WTC11 (cell line): ENCODE measurements at regions of chr15 and their contacts with region 1.

Region 1: GRCh38 chr15:57751177-57751800 is 44.8 kb downstream of the POLR2M start:
- DNase-seq: no peak
- ATAC-seq: peak; percentile 48
- H3K4me3 Mint-ChIP-seq: no peak overlapping the region
- H3K27ac Mint-ChIP-seq: no peak overlapping the region
- H3K4me1 Mint-ChIP-seq: peaks cover 39% of the 10 kb centered on the region
- H3K27me3 Mint-ChIP-seq: peaks cover 4% of the 10 kb centered on the region; the same call in 1 of the 2 replicates
- CTCF ChIP-seq: no peak

Region 2: GRCh38 chr15:57476533-57476975 is 274.7 kb before region 1 on chr15:
- CTCF ChIA-PET with region 1: no interaction called
- POLR2A ChIA-PET with region 1: no interaction called
- DNase-seq: no peak
- ATAC-seq: no peak
- H3K4me3 Mint-ChIP-seq: no peak overlapping the region
- H3K27ac Mint-ChIP-seq: peak overlapping the region; percentile 57; the same call in 1 of the 2 replicates
- H3K4me1 Mint-ChIP-seq: peaks cover 35% of the 10 kb centered on the region
- H3K27me3 Mint-ChIP-seq: no peaks in the 10 kb centered on the region
- CTCF ChIP-seq: no peak

Region 3: GRCh38 chr15:57591646-57592367 is 159.5 kb before region 1 on chr15 and contains the start of gene MYZAP:
- CTCF ChIA-PET with region 1: no interaction called
- POLR2A ChIA-PET with region 1: no interaction called
- DNase-seq: peak; percentile 66
- ATAC-seq: peak; percentile 95
- H3K4me3 Mint-ChIP-seq: peak within 1 kb of the TSS; percentile 75
- H3K27ac Mint-ChIP-seq: no peak within 1 kb of the TSS
- H3K4me1 Mint-ChIP-seq: peaks cover 11% of the 10 kb centered on the region
- H3K27me3 Mint-ChIP-seq: peaks cover 43% of the 10 kb centered on the region
- CTCF ChIP-seq: no peak
- total RNA-seq, gene MYZAP: 0.60 to 0.73 TPM (median 0.68 TPM) in 3 replicates

Region 4: GRCh38 chr15:57692709-57693108 is 58.6 kb before region 1 on chr15:
- CTCF ChIA-PET with region 1: no interaction called
- POLR2A ChIA-PET with region 1: no interaction called
- DNase-seq: no peak
- ATAC-seq: no peak
- H3K4me3 Mint-ChIP-seq: no peak overlapping the region
- H3K27ac Mint-ChIP-seq: no peak overlapping the region
- H3K4me1 Mint-ChIP-seq: no peaks in the 10 kb centered on the region
- H3K27me3 Mint-ChIP-seq: peaks cover 3% of the 10 kb centered on the region; the same call in 1 of the 2 replicates
- CTCF ChIP-seq: no peak

Region 5: DNA sequence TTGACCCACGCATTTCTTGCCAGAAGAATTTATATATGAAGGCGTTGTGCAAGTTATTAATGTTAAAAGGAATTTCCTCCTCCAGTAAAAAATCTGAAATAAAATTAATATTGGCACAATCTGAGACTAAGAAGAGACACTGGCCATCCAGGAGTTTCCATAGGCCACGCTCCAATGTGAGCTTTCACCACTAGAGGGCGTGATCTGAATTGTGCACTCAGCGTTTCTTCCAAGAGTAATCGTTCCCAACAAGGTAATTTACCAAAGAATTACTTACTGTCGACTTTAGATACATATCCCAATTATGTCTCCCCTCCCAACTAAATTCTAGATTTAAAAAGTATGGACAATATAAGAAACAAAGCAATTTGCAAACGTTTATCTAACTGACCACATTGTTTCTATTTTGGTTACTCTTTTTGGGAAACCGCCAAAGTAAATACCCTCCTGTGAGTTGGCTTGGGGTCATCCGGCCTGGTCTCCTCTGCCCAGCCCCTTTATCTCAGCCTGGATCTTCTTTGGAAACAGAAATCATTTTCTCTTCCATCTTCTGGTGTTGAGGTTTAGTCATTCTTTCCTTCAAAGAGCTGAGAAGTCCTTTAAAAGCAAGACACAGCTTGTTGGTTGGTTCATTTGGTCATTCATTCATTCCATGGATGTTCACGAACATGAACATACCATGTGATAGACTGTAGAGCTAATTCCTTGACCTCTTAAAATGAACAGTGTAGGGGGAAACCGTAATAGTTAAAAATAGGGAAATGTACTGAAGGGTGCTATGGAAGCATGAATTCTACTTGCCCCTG is 18.6 kb before region 1 on chr15:
- CTCF ChIA-PET with region 1: interaction called, 72 read pairs
- POLR2A ChIA-PET with region 1: no interaction called
- DNase-seq: peak; percentile 74
- ATAC-seq: peak; percentile 75
- H3K4me3 Mint-ChIP-seq: no peak overlapping the region
- H3K27ac Mint-ChIP-seq: no peak overlapping the region
- H3K4me1 Mint-ChIP-seq: peaks cover 15% of the 10 kb centered on the region; the same call in 1 of the 2 replicates
- H3K27me3 Mint-ChIP-seq: no peaks in the 10 kb centered on the region
- CTCF ChIP-seq: peak; percentile 82

Region 6: GRCh38 chr15:57777003-57777402 is 25.7 kb after region 1 on chr15:
- CTCF ChIA-PET with region 1: interaction called, 21 read pairs
- POLR2A ChIA-PET with region 1: no interaction called
- DNase-seq: no peak
- ATAC-seq: no peak
- H3K4me3 Mint-ChIP-seq: no peak overlapping the region
- H3K27ac Mint-ChIP-seq: no peak overlapping the region
- H3K4me1 Mint-ChIP-seq: peaks cover 15% of the 10 kb centered on the region
- H3K27me3 Mint-ChIP-seq: no peaks in the 10 kb centered on the region
- CTCF ChIP-seq: no peak

Region 7: GRCh38 chr15:57866149-57866736 is 115.0 kb after region 1 on chr15:
- CTCF ChIA-PET with region 1: interaction called, 134 read pairs
- POLR2A ChIA-PET with region 1: no interaction called
- DNase-seq: peak; percentile 82
- ATAC-seq: peak; percentile 83
- H3K4me3 Mint-ChIP-seq: no peak overlapping the region
- H3K27ac Mint-ChIP-seq: no peak overlapping the region
- H3K4me1 Mint-ChIP-seq: no peaks in the 10 kb centered on the region
- H3K27me3 Mint-ChIP-seq: no peaks in the 10 kb centered on the region; the same call in 1 of the 2 replicates
- CTCF ChIP-seq: no peak; the same call in 1 of the 2 replicates

Region 8: DNA sequence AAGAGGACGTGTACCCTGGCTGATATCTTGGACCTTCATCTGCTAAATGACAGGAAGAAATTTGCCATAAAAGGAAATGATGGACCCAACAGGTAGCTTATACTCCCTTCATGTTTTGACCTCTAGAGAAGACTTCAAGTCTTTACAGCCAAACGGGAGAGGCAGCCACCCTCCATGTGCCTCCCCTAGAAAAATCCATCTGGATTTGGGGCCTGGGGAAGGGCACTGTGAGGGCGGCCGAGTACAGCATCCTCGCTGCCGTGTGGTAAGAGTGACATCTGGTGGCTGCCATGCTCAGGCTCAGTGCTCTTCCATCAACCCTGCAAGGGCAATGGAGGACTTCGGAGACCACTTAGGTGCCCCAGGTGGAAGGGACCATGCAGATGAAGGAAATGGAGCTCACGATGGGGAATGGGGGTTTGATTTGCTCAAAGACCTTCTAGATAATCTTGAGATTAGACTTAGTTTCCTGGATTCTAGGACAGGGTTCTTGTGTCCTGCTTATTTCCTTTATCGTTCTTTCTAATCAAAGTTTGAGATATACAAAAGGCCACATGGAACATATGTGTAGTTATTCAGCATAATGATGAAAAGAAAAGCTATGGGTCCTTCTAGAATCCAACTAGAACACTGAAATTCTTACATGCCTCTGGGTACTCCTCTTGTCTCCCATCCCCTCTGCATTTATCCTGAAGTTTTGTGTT is 431.3 kb after region 1 on chr15:
- CTCF ChIA-PET with region 1: interaction called, 11 read pairs
- POLR2A ChIA-PET with region 1: no interaction called
- DNase-seq: peak; percentile 71
- ATAC-seq: peak; percentile 100
- H3K4me3 Mint-ChIP-seq: no peak overlapping the region
- H3K27ac Mint-ChIP-seq: no peak overlapping the region
- H3K4me1 Mint-ChIP-seq: peaks cover 7% of the 10 kb centered on the region; the same call in 1 of the 2 replicates
- H3K27me3 Mint-ChIP-seq: no peaks in the 10 kb centered on the region; the same call in 1 of the 2 replicates
- CTCF ChIP-seq: peak; percentile 62